ENCODE measurements at regions of chr4 and their contacts with region 1.

Region 1: DNA sequence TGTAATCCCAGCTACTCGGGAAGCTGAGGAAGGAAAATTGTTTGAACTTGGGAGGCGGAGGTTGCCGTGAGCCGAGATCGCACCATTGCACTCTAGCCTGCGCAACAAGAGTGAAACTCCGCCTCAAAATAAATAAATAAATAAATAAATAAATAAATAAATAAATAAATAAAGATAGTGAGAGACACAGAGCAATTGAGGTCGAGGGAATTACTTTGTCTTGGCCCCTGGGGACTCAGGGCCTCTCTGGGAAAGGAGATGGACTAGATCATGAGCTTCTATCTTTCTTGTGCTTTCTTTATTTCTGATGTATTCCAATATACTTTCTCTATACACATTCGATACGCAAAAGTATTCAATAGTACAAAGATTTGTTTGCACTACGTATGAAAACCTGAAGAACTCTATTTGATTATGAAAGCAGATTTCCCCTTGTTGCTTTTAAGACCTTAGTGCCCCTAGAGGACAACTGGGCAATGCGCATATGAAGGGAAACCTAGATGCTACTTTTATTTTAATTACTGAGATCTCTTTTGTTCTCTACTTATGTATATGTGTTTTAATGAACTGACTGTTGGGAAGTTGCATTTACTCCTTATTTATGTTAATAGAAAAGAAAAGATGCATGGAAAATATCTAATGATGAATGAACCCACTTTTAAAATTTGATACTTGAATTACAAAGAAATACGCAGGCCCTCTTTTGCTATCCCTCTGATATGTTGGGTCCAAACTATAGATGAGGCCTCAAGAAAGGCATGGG is 12.8 kb upstream of the ELOVL6 start:
- DNase-seq: peak; percentile 38
- H3K4me3 Mint-ChIP-seq: no peak overlapping the region
- H3K27ac Mint-ChIP-seq: no peak overlapping the region
- H3K4me1 Mint-ChIP-seq: no peaks in the 10 kb centered on the region
- H3K27me3 Mint-ChIP-seq: no peaks in the 10 kb centered on the region

Region 2: DNA sequence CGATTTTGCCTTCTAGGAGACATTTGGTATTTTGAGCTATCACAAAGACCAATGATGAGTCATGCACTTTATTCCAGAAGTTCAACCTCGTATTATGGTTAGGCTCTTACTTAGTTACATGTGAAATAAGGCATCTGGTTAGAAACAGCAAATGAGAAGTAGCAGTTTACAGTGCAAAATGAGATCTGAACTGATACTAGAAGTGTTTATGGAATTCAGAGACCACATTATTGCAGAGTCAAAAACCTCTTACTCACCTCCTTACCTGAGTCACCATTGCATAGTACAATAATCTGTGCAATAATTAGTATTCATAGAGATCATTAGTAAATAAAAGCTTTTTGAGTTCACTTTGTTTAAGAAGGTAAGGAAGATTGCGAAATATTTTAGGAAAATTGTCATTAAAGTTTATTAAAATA is 738.8 kb before region 1 on chr4:
- CTCF ChIA-PET with region 1: no interaction called
- intact Hi-C with region 1: no loop called
- DNase-seq: no peak
- H3K4me3 Mint-ChIP-seq: no peak overlapping the region
- H3K27ac Mint-ChIP-seq: no peak overlapping the region
- H3K4me1 Mint-ChIP-seq: peaks cover 53% of the 10 kb centered on the region
- H3K27me3 Mint-ChIP-seq: no peaks in the 10 kb centered on the region

Region 3: GRCh38 chr4:110049951-110050925 is 160.9 kb before region 1 on chr4:
- CTCF ChIA-PET with region 1: interaction called, 27 read pairs
- intact Hi-C with region 1: loop called (anchors 1 kb)
- DNase-seq: peak; percentile 71
- H3K4me3 Mint-ChIP-seq: no peak overlapping the region
- H3K27ac Mint-ChIP-seq: no peak overlapping the region
- H3K4me1 Mint-ChIP-seq: no peaks in the 10 kb centered on the region
- H3K27me3 Mint-ChIP-seq: no peaks in the 10 kb centered on the region

Measured in activated naive CD4-positive, alpha-beta T cell treated with anti-CD3 and anti-CD28 coated beads for 36 hours (primary cell).